ENCODE measurements at regions of chrX and their contacts with region 1.

Region 1: GRCh38 chrX:107968623-107969022 is 13.5 kb downstream of the TEX13B start:
- DNase-seq: no peak
- ATAC-seq: no peak
- H3K4me3 ChIP-seq: no peak overlapping the region
- H3K4me3 Mint-ChIP-seq: no peak overlapping the region
- H3K27ac ChIP-seq: no peak overlapping the region
- H3K27ac Mint-ChIP-seq: no peak overlapping the region
- H3K4me1 ChIP-seq: no peaks in the 10 kb centered on the region
- H3K4me1 Mint-ChIP-seq: no peaks in the 10 kb centered on the region
- H3K27me3 ChIP-seq: no peaks in the 10 kb centered on the region
- H3K27me3 Mint-ChIP-seq: peaks cover 2% of the 10 kb centered on the region
- CTCF ChIP-seq: no peak

Region 2: DNA sequence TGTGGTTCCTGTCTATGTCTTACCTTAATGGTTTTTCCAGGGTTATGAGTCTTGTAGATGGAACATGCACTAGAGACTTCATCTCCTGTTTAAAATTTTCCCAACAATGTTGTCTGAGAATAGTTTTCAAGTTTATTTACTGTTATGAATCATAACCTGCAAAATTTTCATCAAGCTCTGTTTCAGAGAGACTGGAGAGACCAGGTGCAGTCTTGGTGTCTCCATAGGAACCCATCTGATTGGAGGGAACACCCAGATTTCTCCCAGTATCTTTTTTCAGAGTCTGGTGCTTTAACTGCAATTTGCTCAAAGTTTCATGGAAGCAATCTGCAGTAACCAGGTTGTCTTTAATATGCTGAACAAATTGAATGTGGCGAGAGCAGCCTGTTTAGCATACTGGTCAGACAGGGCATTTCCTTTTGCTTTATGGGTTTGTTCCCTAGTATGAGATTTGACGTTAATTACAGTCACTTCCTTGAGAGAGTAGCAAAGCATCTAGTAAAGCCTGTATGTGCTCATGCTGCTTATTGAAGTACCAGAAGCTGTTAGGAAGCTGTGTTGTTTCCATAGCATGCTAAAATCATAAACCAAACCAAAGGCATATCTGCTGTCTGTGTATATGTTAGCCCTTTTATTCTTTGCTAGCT is 57.5 kb after region 1 on chrX:
- CTCF ChIA-PET with region 1: interaction called, 6 read pairs
- POLR2A ChIA-PET with region 1: no interaction called
- intact Hi-C with region 1: loop called in 1 of 2 experiments (anchors 2 kb)
- DNase-seq: peak in 2 of 9 experiments; percentile 24 to 37
- ATAC-seq: peak; percentile 84
- H3K4me3 ChIP-seq: no peak overlapping the region
- H3K4me3 Mint-ChIP-seq: no peak overlapping the region
- H3K27ac ChIP-seq: no peak overlapping the region
- H3K27ac Mint-ChIP-seq: peak overlapping the region; percentile 76
- H3K4me1 ChIP-seq: peaks cover 47% of the 10 kb centered on the region
- H3K4me1 Mint-ChIP-seq: peaks cover 76% of the 10 kb centered on the region
- H3K27me3 ChIP-seq: no peaks in the 10 kb centered on the region
- H3K27me3 Mint-ChIP-seq: no peaks in the 10 kb centered on the region
- CTCF ChIP-seq: no peak

Measured in CD8-positive, alpha-beta T cell (primary cell).